HCT116 (cell line): ENCODE measurements at regions of chr9 and their contacts with region 1.

Region 1: GRCh38 chr9:121299467-121300234 is 31.7 kb downstream of the GSN start:
- DNase-seq: no peak
- ATAC-seq: peak; percentile 78
- H3K4me3 ChIP-seq: peak overlapping the region; percentile 43 to 59
- H3K27ac ChIP-seq: peak overlapping the region; percentile 36; the same call in 1 of the 2 replicates
- H3K4me1 ChIP-seq: peaks cover 16 to 34% of the 10 kb centered on the region in 2 experiments; a peak in 3 of 4 replicates
- H3K27me3 ChIP-seq: no peaks in the 10 kb centered on the region
- CTCF ChIP-seq: no peak
- POLR2A ChIP-seq: peak; percentile 26
- RAD21 ChIP-seq: no peak

Region 2: GRCh38 chr9:121286973-121287741 is 12.5 kb before region 1 on chr9:
- CTCF ChIA-PET with region 1: interaction called, 12 read pairs
- POLR2A ChIA-PET with region 1: interaction called, 10 read pairs
- RAD21 ChIA-PET with region 1: no interaction called
- intact Hi-C with region 1: no loop called
- DNase-seq: peak; percentile 98
- ATAC-seq: peak; percentile 86
- H3K4me3 ChIP-seq: peak overlapping the region; percentile 39 to 52
- H3K27ac ChIP-seq: peak overlapping the region; percentile 99
- H3K4me1 ChIP-seq: peaks cover 77 to 81% of the 10 kb centered on the region in 2 experiments
- H3K27me3 ChIP-seq: no peaks in the 10 kb centered on the region
- CTCF ChIP-seq: peak in 2 of 3 experiments; percentile 39 to 45; a peak in 4 of 6 replicates
- POLR2A ChIP-seq: peak; percentile 11
- RAD21 ChIP-seq: no peak